Activated B cell treated with CpG ODN at 0.5 μM for 24 hours (primary cell): ENCODE measurements at regions of chr9 and their contacts with region 1.

Region 1: GRCh38 chr9:27441741-27442070 is 82.4 kb upstream of the IFNK start:
- DNase-seq: no peak
- ATAC-seq: peak; percentile 98
- H3K4me3 Mint-ChIP-seq: peak overlapping the region; percentile 32
- H3K27ac Mint-ChIP-seq: peak overlapping the region; percentile 75
- H3K4me1 Mint-ChIP-seq: peaks cover 69% of the 10 kb centered on the region
- H3K27me3 Mint-ChIP-seq: no peaks in the 10 kb centered on the region
- CTCF ChIP-seq: no peak

Region 2: DNA sequence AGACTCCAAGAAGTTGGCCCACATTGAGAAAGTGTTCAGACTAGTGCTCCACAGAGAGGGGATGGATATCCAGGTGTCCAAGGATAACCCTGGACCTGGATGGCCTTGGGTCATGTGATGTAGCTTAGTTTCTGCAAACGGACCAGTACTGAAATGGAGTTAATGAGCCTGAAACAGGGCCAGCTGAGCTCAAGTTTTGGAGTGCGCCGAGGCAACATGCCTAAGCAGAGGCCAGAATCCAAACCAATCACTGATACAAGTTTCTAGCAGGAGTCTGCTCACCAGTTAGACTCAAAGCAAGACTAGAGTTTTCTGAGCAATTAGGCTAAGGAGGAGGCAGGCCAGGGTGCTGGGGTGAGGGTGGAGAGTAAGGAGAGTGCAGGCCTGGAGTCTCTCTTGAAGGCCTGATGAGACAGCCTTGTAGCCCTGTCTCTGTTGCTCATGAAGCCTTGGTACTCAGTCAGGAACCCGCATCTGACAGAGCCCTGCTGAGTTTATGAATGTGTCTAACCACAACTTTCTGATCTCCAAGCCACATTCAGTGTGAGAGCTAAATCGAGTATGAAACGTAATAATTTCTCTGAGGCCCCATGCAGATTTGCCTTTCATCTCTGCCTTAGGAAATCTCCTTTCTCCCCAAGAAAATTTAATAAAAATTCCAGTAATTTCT is 75.9 kb before region 1 on chr9:
- CTCF ChIA-PET with region 1: no interaction called
- POLR2A ChIA-PET with region 1: interaction called, 3 read pairs
- intact Hi-C with region 1: loop called (anchors 5 kb)
- DNase-seq: no peak
- ATAC-seq: peak; percentile 73
- H3K4me3 Mint-ChIP-seq: peak overlapping the region; percentile 65
- H3K27ac Mint-ChIP-seq: peak overlapping the region; percentile 63
- H3K4me1 Mint-ChIP-seq: peaks cover 61% of the 10 kb centered on the region
- H3K27me3 Mint-ChIP-seq: no peaks in the 10 kb centered on the region
- CTCF ChIP-seq: no peak

Region 3: GRCh38 chr9:27385606-27386322 is 55.9 kb before region 1 on chr9:
- CTCF ChIA-PET with region 1: no interaction called
- POLR2A ChIA-PET with region 1: interaction called, 3 read pairs
- intact Hi-C with region 1: loop called (anchors 2 kb)
- DNase-seq: no peak
- ATAC-seq: no peak
- H3K4me3 Mint-ChIP-seq: peak overlapping the region; percentile 19
- H3K27ac Mint-ChIP-seq: no peak overlapping the region
- H3K4me1 Mint-ChIP-seq: peaks cover 86% of the 10 kb centered on the region
- H3K27me3 Mint-ChIP-seq: no peaks in the 10 kb centered on the region
- CTCF ChIP-seq: no peak

Region 4: GRCh38 chr9:27407986-27408385 is 33.7 kb before region 1 on chr9:
- CTCF ChIA-PET with region 1: no interaction called
- POLR2A ChIA-PET with region 1: no interaction called
- intact Hi-C with region 1: no loop called
- DNase-seq: no peak
- ATAC-seq: no peak
- H3K4me3 Mint-ChIP-seq: no peak overlapping the region
- H3K27ac Mint-ChIP-seq: no peak overlapping the region
- H3K4me1 Mint-ChIP-seq: peaks cover 29% of the 10 kb centered on the region
- H3K27me3 Mint-ChIP-seq: no peaks in the 10 kb centered on the region
- CTCF ChIP-seq: no peak

Region 5: GRCh38 chr9:27427273-27427645 is 14.4 kb before region 1 on chr9:
- CTCF ChIA-PET with region 1: interaction called, 3 read pairs
- POLR2A ChIA-PET with region 1: no interaction called
- intact Hi-C with region 1: loop called (anchors 1 kb)
- DNase-seq: no peak
- ATAC-seq: no peak
- H3K4me3 Mint-ChIP-seq: no peak overlapping the region
- H3K27ac Mint-ChIP-seq: no peak overlapping the region
- H3K4me1 Mint-ChIP-seq: peaks cover 68% of the 10 kb centered on the region
- H3K27me3 Mint-ChIP-seq: no peaks in the 10 kb centered on the region
- CTCF ChIP-seq: no peak

Region 6: GRCh38 chr9:27460226-27461023 is 18.7 kb after region 1 on chr9:
- CTCF ChIA-PET with region 1: interaction called, 4 read pairs
- POLR2A ChIA-PET with region 1: interaction called, 6 read pairs
- intact Hi-C with region 1: loop called (anchors 1 kb)
- DNase-seq: no peak
- ATAC-seq: peak; percentile 93
- H3K4me3 Mint-ChIP-seq: peak overlapping the region; percentile 66
- H3K27ac Mint-ChIP-seq: peak overlapping the region; percentile 86
- H3K4me1 Mint-ChIP-seq: peaks cover 61% of the 10 kb centered on the region
- H3K27me3 Mint-ChIP-seq: no peaks in the 10 kb centered on the region
- CTCF ChIP-seq: no peak

Region 7: DNA sequence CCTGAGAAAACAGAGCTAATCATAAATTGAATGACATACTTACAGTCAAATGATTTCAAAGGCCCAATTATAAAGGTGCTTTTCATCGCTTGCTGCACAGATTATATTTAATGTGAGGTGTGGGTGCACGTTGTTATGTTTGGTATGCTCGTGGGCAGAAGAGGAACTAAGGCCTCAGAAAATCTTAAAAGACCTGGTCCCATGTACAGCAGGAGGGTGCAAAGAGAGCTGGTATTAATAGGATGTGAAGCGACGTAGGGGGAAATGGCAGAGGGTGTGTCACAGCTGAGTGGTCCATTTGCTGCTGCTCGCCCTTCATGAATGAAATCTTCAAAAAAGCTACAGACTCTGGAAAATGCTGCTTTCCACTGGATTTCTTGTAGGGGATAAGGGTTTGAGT is 41.9 kb after region 1 on chr9:
- CTCF ChIA-PET with region 1: interaction called, 3 read pairs
- POLR2A ChIA-PET with region 1: no interaction called
- intact Hi-C with region 1: loop called (anchors 2 kb)
- DNase-seq: no peak
- ATAC-seq: peak; percentile 68
- H3K4me3 Mint-ChIP-seq: peak overlapping the region; percentile 49
- H3K27ac Mint-ChIP-seq: peak overlapping the region; percentile 81
- H3K4me1 Mint-ChIP-seq: peaks cover 91% of the 10 kb centered on the region
- H3K27me3 Mint-ChIP-seq: no peaks in the 10 kb centered on the region
- CTCF ChIP-seq: no peak

Region 8: GRCh38 chr9:27573634-27574590 is 132.2 kb after region 1 on chr9:
- CTCF ChIA-PET with region 1: no interaction called
- POLR2A ChIA-PET with region 1: interaction called, 3 read pairs
- intact Hi-C with region 1: loop called (anchors 1 kb)
- DNase-seq: peak; percentile 77
- ATAC-seq: peak; percentile 88
- H3K4me3 Mint-ChIP-seq: peak overlapping the region; percentile 97
- H3K27ac Mint-ChIP-seq: peak overlapping the region; percentile 99
- H3K4me1 Mint-ChIP-seq: peaks cover 24% of the 10 kb centered on the region
- H3K27me3 Mint-ChIP-seq: no peaks in the 10 kb centered on the region
- CTCF ChIP-seq: no peak